PC-3 (cell line): ENCODE measurements at regions of chr7 and their contacts with region 1.

Region 1: DNA sequence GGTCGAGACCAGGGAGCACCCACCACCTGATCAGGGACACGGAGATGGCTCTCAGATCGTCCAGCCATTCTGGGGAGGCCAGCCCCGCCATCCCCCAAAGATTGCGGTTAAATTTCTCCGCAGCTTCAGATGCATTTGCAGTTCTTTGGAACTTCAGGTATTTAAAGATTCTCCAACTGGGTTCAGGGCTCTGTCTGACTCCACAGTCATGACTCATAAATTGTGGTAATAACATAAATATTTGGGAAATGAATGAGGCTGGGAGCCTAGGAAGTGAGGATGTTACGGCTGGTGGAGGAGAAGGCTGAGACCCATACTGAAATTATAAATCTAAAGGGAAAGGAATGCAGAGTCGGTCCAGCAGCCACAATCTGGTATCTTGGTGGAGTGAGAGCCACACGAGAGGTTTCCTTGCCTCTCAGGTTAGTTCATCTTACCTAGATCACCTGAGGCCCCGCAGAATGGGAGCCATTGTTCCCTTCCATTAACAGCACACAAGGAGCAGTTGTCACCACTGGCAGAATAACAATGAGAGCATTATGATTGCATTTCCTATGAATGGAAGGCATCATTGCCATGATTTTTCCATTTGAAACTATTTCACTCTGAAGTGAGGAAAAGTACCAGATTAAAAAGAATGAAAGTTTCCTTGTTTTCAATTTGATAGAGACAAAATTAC is 26.7 kb upstream of the DNAJB6 start:
- DNase-seq: peak; percentile 97
- ATAC-seq: peak; percentile 88
- H3K4me3 ChIP-seq: peak overlapping the region; percentile 42
- H3K27ac ChIP-seq: peak overlapping the region; percentile 99
- H3K4me1 ChIP-seq: peaks cover 25% of the 10 kb centered on the region
- H3K27me3 ChIP-seq: no peaks in the 10 kb centered on the region
- CTCF ChIP-seq: no peak

Region 2: DNA sequence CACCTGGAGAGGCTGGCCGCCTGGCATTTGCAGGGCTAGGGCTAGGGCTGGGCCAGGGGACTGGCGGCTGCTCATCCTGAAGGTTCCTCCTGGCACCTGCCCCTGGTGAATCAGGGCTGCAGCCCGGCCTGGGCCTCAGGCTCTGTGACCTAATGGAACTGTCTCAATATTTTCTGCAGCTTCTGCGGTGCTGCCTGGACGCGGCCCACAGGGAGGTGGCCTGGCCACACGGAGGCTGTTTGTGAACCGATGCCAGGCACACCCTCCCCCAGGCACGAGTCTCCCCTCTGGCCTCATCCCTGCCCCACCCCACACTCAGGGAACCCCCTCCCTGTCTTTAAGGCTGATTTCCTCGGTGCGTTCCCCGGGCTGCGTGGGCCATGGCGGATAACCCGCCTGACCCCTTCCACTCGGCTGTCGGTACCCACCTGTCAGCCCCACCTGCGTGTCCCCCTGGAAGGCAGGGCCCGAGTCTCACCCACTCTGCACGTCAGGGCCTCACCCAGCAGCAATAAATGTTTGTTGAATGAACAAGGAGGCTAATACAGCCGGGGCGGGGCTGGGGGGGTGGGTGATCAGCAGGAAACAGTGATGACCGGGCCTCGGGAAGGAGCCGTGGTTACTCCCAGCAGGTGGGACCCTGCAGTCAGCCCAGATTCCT is 27.9 kb before region 1 on chr7:
- CTCF ChIA-PET with region 1: no interaction called
- POLR2A ChIA-PET with region 1: no interaction called
- intact Hi-C with region 1: loop called (anchors 1 kb)
- DNase-seq: peak; percentile 82
- ATAC-seq: peak; percentile 75
- H3K4me3 ChIP-seq: peak overlapping the region; percentile 58
- H3K27ac ChIP-seq: peak overlapping the region; percentile 84
- H3K4me1 ChIP-seq: peaks cover 31% of the 10 kb centered on the region
- H3K27me3 ChIP-seq: no peaks in the 10 kb centered on the region
- CTCF ChIP-seq: no peak

Region 3: DNA sequence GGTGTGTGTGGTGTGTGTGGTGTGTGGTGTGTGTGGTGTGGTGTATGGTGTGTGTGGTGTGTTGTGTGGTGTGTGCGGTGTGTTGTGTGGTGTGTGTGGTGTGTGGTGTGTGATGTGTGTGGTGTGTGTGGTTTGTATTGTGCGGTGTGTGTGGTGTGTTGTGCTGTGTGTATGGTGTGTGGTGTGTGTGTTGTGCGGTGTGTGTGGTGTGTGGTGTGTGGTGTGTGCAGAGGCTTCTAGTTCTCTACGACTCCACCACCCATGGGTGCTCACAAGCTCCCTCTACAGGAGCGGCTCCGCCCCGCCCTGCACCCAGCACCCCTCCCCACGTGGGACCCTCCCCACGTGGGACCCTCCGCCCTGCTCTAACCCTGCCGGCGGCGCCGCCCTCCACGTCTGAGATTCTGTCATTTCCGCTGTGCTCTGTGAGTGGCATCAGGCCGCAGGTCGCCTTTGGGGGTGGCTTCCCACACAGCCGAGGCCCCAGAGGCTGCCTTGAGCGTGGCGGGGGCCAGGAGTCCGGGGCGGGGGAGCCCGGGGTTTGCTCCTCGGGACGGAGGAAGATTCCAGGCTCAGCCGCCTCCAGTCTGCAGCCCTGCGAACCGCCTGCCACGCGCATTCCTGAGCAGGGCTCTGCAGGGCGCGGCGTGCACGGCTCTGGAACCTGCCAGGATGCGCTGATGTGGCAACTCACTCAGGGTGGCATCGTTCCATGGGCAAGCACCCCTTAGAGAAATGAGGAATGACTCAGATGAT is 10.3 kb before region 1 on chr7:
- CTCF ChIA-PET with region 1: no interaction called
- POLR2A ChIA-PET with region 1: no interaction called
- intact Hi-C with region 1: loop called (anchors 1 kb)
- DNase-seq: peak; percentile 26
- ATAC-seq: no peak
- H3K4me3 ChIP-seq: no peak overlapping the region
- H3K27ac ChIP-seq: no peak overlapping the region
- H3K4me1 ChIP-seq: peaks cover 27% of the 10 kb centered on the region
- H3K27me3 ChIP-seq: no peaks in the 10 kb centered on the region
- CTCF ChIP-seq: peak; percentile 35; the same call in 1 of the 2 replicates